ENCODE measurements at regions of chr1 and their contacts with region 1.

Region 1: DNA sequence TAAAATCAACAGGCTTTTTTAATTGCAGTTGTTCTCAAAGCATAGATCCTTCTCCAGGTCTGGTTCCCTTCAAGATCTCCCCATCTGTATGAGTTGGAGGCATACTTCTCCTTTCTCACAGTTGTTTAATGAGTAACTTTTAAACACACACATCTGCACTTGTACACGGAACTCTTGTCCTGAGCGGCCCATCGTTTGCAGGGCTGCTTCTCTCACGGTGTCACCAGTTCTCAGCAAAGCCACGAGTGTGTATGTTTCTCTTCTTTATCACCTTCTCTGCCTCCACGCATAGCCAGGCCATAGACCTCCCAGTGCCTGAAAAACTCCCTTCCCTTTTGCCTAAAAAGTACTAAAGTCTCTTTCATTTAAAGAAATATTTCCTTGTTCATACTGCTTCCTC is 68.7 kb upstream of the ROR1 start:
- DNase-seq: no peak
- ATAC-seq: no peak
- H3K4me3 ChIP-seq: no peak overlapping the region
- H3K27ac ChIP-seq: peak overlapping the region; percentile 79
- H3K4me1 ChIP-seq: peaks cover 45% of the 10 kb centered on the region
- H3K27me3 ChIP-seq: no peaks in the 10 kb centered on the region
- CTCF ChIP-seq: no peak

Region 2: GRCh38 chr1:63723613-63724012 is 18.5 kb after region 1 on chr1:
- CTCF ChIA-PET with region 1: no interaction called
- POLR2A ChIA-PET with region 1: interaction called, 18 read pairs
- intact Hi-C with region 1: no loop called
- DNase-seq: peak; percentile 47
- ATAC-seq: peak; percentile 67
- H3K4me3 ChIP-seq: no peak overlapping the region
- H3K27ac ChIP-seq: peak overlapping the region; percentile 25; the same call in 1 of the 2 replicates
- H3K4me1 ChIP-seq: peaks cover 24% of the 10 kb centered on the region
- H3K27me3 ChIP-seq: no peaks in the 10 kb centered on the region
- CTCF ChIP-seq: no peak

Region 3: GRCh38 chr1:63731117-63732043 is 26.3 kb after region 1 on chr1:
- CTCF ChIA-PET with region 1: no interaction called
- POLR2A ChIA-PET with region 1: no interaction called
- intact Hi-C with region 1: loop called (anchors 2 kb)
- DNase-seq: peak; percentile 99
- ATAC-seq: peak; percentile 87
- H3K4me3 ChIP-seq: peak overlapping the region; percentile 15; the same call in 1 of the 2 replicates
- H3K27ac ChIP-seq: peak overlapping the region; percentile 96
- H3K4me1 ChIP-seq: peaks cover 36% of the 10 kb centered on the region
- H3K27me3 ChIP-seq: no peaks in the 10 kb centered on the region
- CTCF ChIP-seq: no peak

Region 4: GRCh38 chr1:63847308-63847910 is 142.3 kb after region 1 on chr1:
- CTCF ChIA-PET with region 1: no interaction called
- POLR2A ChIA-PET with region 1: no interaction called
- intact Hi-C with region 1: no loop called
- DNase-seq: peak; percentile 89
- ATAC-seq: no peak
- H3K4me3 ChIP-seq: no peak overlapping the region
- H3K27ac ChIP-seq: no peak overlapping the region
- H3K4me1 ChIP-seq: peaks cover 11% of the 10 kb centered on the region
- H3K27me3 ChIP-seq: no peaks in the 10 kb centered on the region
- CTCF ChIP-seq: peak; percentile 48

Region 5: DNA sequence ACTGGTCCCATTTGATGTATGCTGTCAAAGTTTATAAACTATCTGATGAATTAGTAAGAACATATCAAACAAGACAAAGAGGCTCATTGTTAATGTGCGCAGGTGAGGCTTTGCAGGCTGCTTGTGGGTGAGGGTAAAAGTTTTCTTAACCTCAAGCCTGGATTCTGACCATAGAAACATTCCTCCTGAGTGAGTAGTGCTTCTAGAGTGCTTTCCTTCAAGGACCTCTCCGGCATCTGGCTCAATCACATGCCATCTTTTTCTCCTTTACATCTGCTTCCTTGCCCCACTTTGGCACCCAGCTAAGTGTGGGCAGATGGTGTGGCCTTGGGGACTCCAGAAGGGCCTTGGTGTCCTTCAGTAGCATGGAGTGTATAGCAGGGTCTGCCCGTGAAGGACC is 172.7 kb after region 1 on chr1:
- CTCF ChIA-PET with region 1: no interaction called
- POLR2A ChIA-PET with region 1: no interaction called
- intact Hi-C with region 1: loop called (anchors 5 kb)
- DNase-seq: peak; percentile 94
- ATAC-seq: peak; percentile 87
- H3K4me3 ChIP-seq: no peak overlapping the region
- H3K27ac ChIP-seq: peak overlapping the region; percentile 89
- H3K4me1 ChIP-seq: peaks cover 65% of the 10 kb centered on the region
- H3K27me3 ChIP-seq: no peaks in the 10 kb centered on the region
- CTCF ChIP-seq: no peak

Measured in PC-3 (cell line).